ENCODE measurements at regions of chr5 and their contacts with region 1.

Region 1: GRCh38 chr5:80069918-80070318 is 34.8 kb downstream of the THBS4 start:
- DNase-seq: no peak
- H3K4me3 ChIP-seq: no peak overlapping the region
- CTCF ChIP-seq: no peak
- POLR2A ChIP-seq: no peak

Region 2: GRCh38 chr5:79865579-79865978 is 204.3 kb before region 1 on chr5:
- intact Hi-C with region 1: loop called (anchors 10 kb)
- DNase-seq: no peak
- H3K4me3 ChIP-seq: no peak overlapping the region
- CTCF ChIP-seq: no peak
- POLR2A ChIP-seq: no peak